ENCODE measurements at regions of chr7 and their contacts with region 1.

Region 1: DNA sequence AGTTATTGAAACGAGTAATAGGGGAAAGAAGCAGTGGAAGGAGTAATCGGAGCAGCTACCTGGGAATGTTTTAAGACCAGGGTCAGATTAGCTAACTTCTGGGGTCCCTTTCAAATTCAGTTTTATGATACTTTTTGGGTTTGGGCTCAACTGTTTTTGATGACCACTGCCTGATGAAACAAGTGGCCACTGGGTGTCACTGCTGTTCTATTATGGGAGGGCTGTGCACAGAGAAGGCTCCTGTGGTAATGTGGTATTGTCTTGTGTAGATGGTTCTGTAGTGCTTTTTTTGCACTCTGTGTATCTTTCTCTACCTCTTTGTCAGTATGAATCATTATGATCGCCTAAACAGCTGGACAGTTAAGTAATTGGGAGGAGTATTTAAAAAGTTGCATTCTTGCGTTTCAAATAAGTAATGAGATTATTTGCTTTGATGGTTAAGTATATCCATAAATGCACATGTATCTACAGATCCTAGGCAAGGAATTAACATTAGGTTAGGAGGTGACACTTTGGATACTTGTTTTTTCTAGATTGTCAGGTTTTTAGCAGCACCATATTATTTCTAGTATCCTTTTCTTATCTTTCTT is 128.4 kb downstream of the ABCA13 start:
- DNase-seq: peak; percentile 79
- ATAC-seq: peak; percentile 62
- H3K4me3 Mint-ChIP-seq: no peak overlapping the region
- H3K27ac Mint-ChIP-seq: no peak overlapping the region
- H3K4me1 Mint-ChIP-seq: peaks cover 16% of the 10 kb centered on the region
- H3K27me3 Mint-ChIP-seq: peaks cover 6% of the 10 kb centered on the region

Region 2: GRCh38 chr7:48088559-48089045 is 211.1 kb before region 1 on chr7:
- CTCF ChIA-PET with region 1: interaction called, 4 read pairs
- POLR2A ChIA-PET with region 1: no interaction called
- intact Hi-C with region 1: loop called in 1 of 2 experiments (anchors 2 kb)
- DNase-seq: no peak
- ATAC-seq: peak; percentile 73
- H3K4me3 Mint-ChIP-seq: peak overlapping the region; percentile 81
- H3K27ac Mint-ChIP-seq: peak overlapping the region; percentile 96
- H3K4me1 Mint-ChIP-seq: peaks cover 67% of the 10 kb centered on the region
- H3K27me3 Mint-ChIP-seq: no peaks in the 10 kb centered on the region

Region 3: GRCh38 chr7:48213226-48213625 is 86.4 kb before region 1 on chr7:
- CTCF ChIA-PET with region 1: no interaction called
- POLR2A ChIA-PET with region 1: no interaction called
- intact Hi-C with region 1: no loop called
- DNase-seq: no peak
- ATAC-seq: no peak
- H3K4me3 Mint-ChIP-seq: no peak overlapping the region
- H3K27ac Mint-ChIP-seq: no peak overlapping the region
- H3K4me1 Mint-ChIP-seq: no peaks in the 10 kb centered on the region
- H3K27me3 Mint-ChIP-seq: peaks cover 5% of the 10 kb centered on the region

Region 4: GRCh38 chr7:48251766-48252165 is 47.9 kb before region 1 on chr7:
- CTCF ChIA-PET with region 1: interaction called, 6 read pairs
- POLR2A ChIA-PET with region 1: interaction called, 3 read pairs
- intact Hi-C with region 1: loop called (anchors 1 kb)
- DNase-seq: no peak
- ATAC-seq: peak; percentile 76
- H3K4me3 Mint-ChIP-seq: no peak overlapping the region
- H3K27ac Mint-ChIP-seq: no peak overlapping the region
- H3K4me1 Mint-ChIP-seq: peaks cover 14% of the 10 kb centered on the region
- H3K27me3 Mint-ChIP-seq: peaks cover 13% of the 10 kb centered on the region

Region 5: DNA sequence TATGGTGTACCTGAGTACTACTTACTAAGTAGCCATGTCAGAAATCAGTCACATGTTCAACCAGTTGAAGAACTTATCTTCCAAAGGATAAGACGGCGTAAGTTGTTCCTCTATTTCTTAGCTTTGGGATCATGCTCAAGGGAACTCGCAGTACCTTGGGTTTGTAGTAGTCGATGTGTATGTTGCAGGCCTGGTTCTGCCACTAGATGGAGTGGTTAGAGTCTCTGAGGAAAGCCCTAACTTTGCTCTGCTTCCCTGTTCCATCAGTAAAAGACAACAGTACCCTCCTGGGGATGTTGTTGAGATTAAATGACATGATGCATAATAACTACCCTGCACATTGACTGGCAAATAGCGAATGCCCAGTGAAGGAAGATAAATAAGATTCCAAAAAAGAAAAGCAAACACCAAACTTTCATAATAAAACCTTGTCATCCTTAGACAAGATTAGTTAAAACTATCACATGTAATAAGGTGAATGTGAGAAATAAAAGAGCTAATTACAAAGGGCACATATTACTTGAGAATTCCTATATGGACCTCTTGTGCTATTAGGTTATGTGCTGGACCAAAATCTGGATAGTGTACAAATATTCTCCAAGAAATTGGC is 37.4 kb after region 1 on chr7:
- CTCF ChIA-PET with region 1: no interaction called
- POLR2A ChIA-PET with region 1: no interaction called
- intact Hi-C with region 1: no loop called
- DNase-seq: peak; percentile 11
- ATAC-seq: no peak
- H3K4me3 Mint-ChIP-seq: no peak overlapping the region
- H3K27ac Mint-ChIP-seq: no peak overlapping the region
- H3K4me1 Mint-ChIP-seq: no peaks in the 10 kb centered on the region
- H3K27me3 Mint-ChIP-seq: peaks cover 3% of the 10 kb centered on the region

Region 6: DNA sequence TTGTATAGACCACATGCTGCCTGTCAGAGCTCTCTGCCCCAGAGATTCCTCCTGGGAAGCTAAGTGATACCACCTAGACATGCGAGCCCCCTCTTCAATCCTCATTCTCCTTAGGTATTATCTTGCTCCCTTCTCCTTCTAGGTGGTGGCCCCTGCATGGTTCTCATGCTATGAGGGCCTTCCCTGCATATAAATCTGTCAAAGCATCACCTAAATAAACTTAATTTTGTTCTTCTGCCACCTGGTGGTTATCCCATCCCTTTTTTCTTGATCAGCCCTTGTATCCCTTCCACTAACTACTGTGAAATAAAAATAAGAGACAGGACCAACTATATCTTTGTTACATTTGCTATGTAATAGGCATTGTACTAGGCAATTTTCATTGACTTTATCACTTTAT is 866.8 kb after region 1 on chr7:
- CTCF ChIA-PET with region 1: interaction called, 3 read pairs
- POLR2A ChIA-PET with region 1: no interaction called
- intact Hi-C with region 1: loop called in 1 of 2 experiments (anchors 5 kb)
- DNase-seq: no peak
- ATAC-seq: no peak
- H3K4me3 Mint-ChIP-seq: no peak overlapping the region
- H3K27ac Mint-ChIP-seq: no peak overlapping the region
- H3K4me1 Mint-ChIP-seq: no peaks in the 10 kb centered on the region
- H3K27me3 Mint-ChIP-seq: peaks cover 1% of the 10 kb centered on the region

Region 7: GRCh38 chr7:49852619-49853462 is 1553.2 kb after region 1 on chr7:
- CTCF ChIA-PET with region 1: no interaction called
- POLR2A ChIA-PET with region 1: no interaction called
- intact Hi-C with region 1: loop called in 1 of 2 experiments (anchors 1 kb)
- DNase-seq: peak; percentile 39
- ATAC-seq: peak; percentile 74
- H3K4me3 Mint-ChIP-seq: no peak overlapping the region
- H3K27ac Mint-ChIP-seq: no peak overlapping the region
- H3K4me1 Mint-ChIP-seq: no peaks in the 10 kb centered on the region
- H3K27me3 Mint-ChIP-seq: no peaks in the 10 kb centered on the region

Measured in activated CD4-positive, alpha-beta T cell treated with anti-CD3 and anti-CD28 coated beads for 36 hours (primary cell).